ENCODE measurements at regions of chr4 and their contacts with region 1.

Region 1: GRCh38 chr4:75653845-75654503 is 19.2 kb downstream of the G3BP2 start:
- DNase-seq: no peak
- ATAC-seq: peak in 2 of 4 donors; percentile 56 to 65
- H3K4me3 ChIP-seq: no peak overlapping the region
- H3K27ac ChIP-seq: no peak overlapping the region
- H3K4me1 ChIP-seq: peaks cover 0 to 2% (median 0%) of the 10 kb centered on the region in 12 donors
- H3K27me3 ChIP-seq: no peaks in the 10 kb centered on the region
- CTCF ChIP-seq: peak; percentile 18 to 58 (median 46)
- POLR2A ChIP-seq: no peak

Region 2: GRCh38 chr4:75612306-75612705 is 41.7 kb before region 1 on chr4:
- intact Hi-C with region 1: no loop called
- DNase-seq: no peak
- ATAC-seq: no peak
- H3K4me3 ChIP-seq: no peak overlapping the region
- H3K27ac ChIP-seq: no peak overlapping the region
- H3K4me1 ChIP-seq: no peaks in the 10 kb centered on the region
- H3K27me3 ChIP-seq: no peaks in the 10 kb centered on the region
- CTCF ChIP-seq: no peak
- POLR2A ChIP-seq: no peak

Region 3: GRCh38 chr4:75708218-75708691 is 54.3 kb after region 1 on chr4:
- intact Hi-C with region 1: no loop called
- DNase-seq: no peak
- ATAC-seq: no peak
- H3K4me3 ChIP-seq: no peak overlapping the region
- H3K27ac ChIP-seq: no peak overlapping the region
- H3K4me1 ChIP-seq: peaks cover 0 to 14% (median 0%) of the 10 kb centered on the region in 12 donors
- H3K27me3 ChIP-seq: no peaks in the 10 kb centered on the region
- CTCF ChIP-seq: peak in 5 of 12 donors; percentile 16 to 43 (median 27)
- POLR2A ChIP-seq: no peak

Region 4: GRCh38 chr4:75724066-75724866 is 70.3 kb after region 1 on chr4 and contains the start of gene USO1:
- intact Hi-C with region 1: loop called in 2 of 10 experiments (anchors 5 kb)
- DNase-seq: peak; percentile 98 to 99 (median 99)
- ATAC-seq: peak; percentile 97 to 99 (median 98)
- H3K4me3 ChIP-seq: peak within 1 kb of the TSS; percentile 58 to 99 (median 94)
- H3K27ac ChIP-seq: peak within 1 kb of the TSS; percentile 92 to 99 (median 96)
- H3K4me1 ChIP-seq: peaks cover 0 to 59% (median 32%) of the 10 kb centered on the region in 12 donors
- H3K27me3 ChIP-seq: no peaks in the 10 kb centered on the region
- CTCF ChIP-seq: peak; percentile 41 to 77 (median 67)
- POLR2A ChIP-seq: peak; percentile 75 to 93
- total RNA-seq, gene USO1: 71.8 to 87.1 (median 77.3) TPM

Region 5: DNA sequence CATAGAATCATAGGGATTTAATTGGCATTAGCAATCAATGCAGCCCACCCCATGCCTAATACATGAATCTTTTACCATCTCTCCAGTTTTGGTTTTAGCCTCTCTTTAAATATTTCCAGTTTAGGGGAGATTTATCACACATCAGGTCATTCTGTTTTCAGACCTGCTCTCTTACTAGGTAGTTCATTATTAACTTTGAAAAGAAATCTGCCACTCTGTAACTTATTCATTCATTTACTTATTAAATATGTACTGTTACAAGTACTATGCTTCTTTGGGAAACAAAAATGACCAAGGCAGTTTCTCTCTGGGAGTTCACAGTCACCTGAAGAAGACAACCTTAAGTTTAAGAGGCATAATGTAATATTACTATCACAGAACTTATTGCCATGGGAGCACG is 132.6 kb after region 1 on chr4:
- intact Hi-C with region 1: loop called in 4 of 10 experiments (anchors 10 kb)
- DNase-seq: no peak
- ATAC-seq: no peak
- H3K4me3 ChIP-seq: no peak overlapping the region
- H3K27ac ChIP-seq: no peak overlapping the region
- H3K4me1 ChIP-seq: no peaks in the 10 kb centered on the region
- H3K27me3 ChIP-seq: no peaks in the 10 kb centered on the region
- CTCF ChIP-seq: no peak
- POLR2A ChIP-seq: no peak

Region 6: GRCh38 chr4:75817901-75818300 is 163.9 kb after region 1 on chr4:
- intact Hi-C with region 1: loop called in 1 of 10 experiments (anchors 10 kb)
- DNase-seq: no peak
- ATAC-seq: no peak
- H3K4me3 ChIP-seq: no peak overlapping the region
- H3K27ac ChIP-seq: no peak overlapping the region
- H3K4me1 ChIP-seq: no peaks in the 10 kb centered on the region
- H3K27me3 ChIP-seq: no peaks in the 10 kb centered on the region
- CTCF ChIP-seq: no peak
- POLR2A ChIP-seq: no peak

Region 7: DNA sequence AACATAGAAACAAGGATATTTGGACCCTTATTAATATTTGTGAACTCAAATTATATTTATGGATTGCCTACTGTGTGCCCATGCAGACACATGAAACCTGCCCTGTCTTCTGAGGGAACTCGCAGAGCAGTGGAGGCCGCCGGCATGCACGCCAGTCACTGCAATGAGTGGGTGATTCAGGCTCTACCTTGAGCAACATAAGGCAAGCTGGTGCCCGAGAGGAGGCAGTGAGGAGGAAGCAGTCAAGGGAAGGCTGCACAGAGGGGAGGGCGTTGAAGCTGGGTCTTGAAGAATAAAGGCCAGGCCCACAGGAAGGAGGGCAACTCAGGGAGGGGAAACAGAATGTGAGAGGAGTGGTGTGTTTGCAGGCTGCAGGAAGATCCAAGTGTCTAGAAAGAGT is 195.5 kb after region 1 on chr4:
- intact Hi-C with region 1: loop called in 1 of 10 experiments (anchors 2 kb)
- DNase-seq: no peak
- ATAC-seq: no peak
- H3K4me3 ChIP-seq: no peak overlapping the region
- H3K27ac ChIP-seq: no peak overlapping the region
- H3K4me1 ChIP-seq: peaks cover 0 to 8% (median 4%) of the 10 kb centered on the region in 12 donors
- H3K27me3 ChIP-seq: no peaks in the 10 kb centered on the region
- CTCF ChIP-seq: no peak
- POLR2A ChIP-seq: no peak